ENCODE measurements at regions of chr2 and their contacts with region 1.

Region 1: GRCh38 chr2:30662268-30663131 is 144.7 kb downstream of the CAPN13 start:
- DNase-seq: no peak
- ATAC-seq: no peak
- H3K4me3 ChIP-seq: no peak overlapping the region
- H3K27ac ChIP-seq: no peak overlapping the region
- H3K4me1 ChIP-seq: no peaks in the 10 kb centered on the region
- H3K27me3 ChIP-seq: peaks cover 0 to 24% of the 10 kb centered on the region in 2 experiments; a peak in 1 of 5 replicates
- CTCF ChIP-seq: no peak
- EP300 ChIP-seq: no peak
- POLR2A ChIP-seq: no peak
- RAD21 ChIP-seq: no peak

Region 2: GRCh38 chr2:30649828-30650227 is 12.7 kb before region 1 on chr2:
- CTCF ChIA-PET with region 1: no interaction called
- POLR2A ChIA-PET with region 1: no interaction called
- in situ Hi-C with region 1: no loop called
- intact Hi-C with region 1: loop called (anchors 1 kb)
- DNase-seq: no peak
- ATAC-seq: peak; percentile 14; the same call in 1 of the 3 replicates
- H3K4me3 ChIP-seq: no peak overlapping the region
- H3K27ac ChIP-seq: no peak overlapping the region
- H3K4me1 ChIP-seq: no peaks in the 10 kb centered on the region
- H3K27me3 ChIP-seq: peaks cover 0 to 8% of the 10 kb centered on the region in 2 experiments; a peak in 4 of 5 replicates
- CTCF ChIP-seq: no peak
- EP300 ChIP-seq: no peak
- POLR2A ChIP-seq: no peak
- RAD21 ChIP-seq: no peak

Region 3: GRCh38 chr2:30915486-30915885 is 253.0 kb after region 1 on chr2:
- CTCF ChIA-PET with region 1: no interaction called
- POLR2A ChIA-PET with region 1: no interaction called
- in situ Hi-C with region 1: no loop called
- intact Hi-C with region 1: no loop called
- DNase-seq: peak; percentile 22
- ATAC-seq: peak; percentile 94
- H3K4me3 ChIP-seq: no peak overlapping the region
- H3K27ac ChIP-seq: no peak overlapping the region
- H3K4me1 ChIP-seq: no peaks in the 10 kb centered on the region
- H3K27me3 ChIP-seq: no peaks in the 10 kb centered on the region; a peak in 1 of 5 replicates
- CTCF ChIP-seq: peak; percentile 58
- EP300 ChIP-seq: no peak
- POLR2A ChIP-seq: no peak
- RAD21 ChIP-seq: no peak

Measured in HepG2 (cell line).